ENCODE measurements at regions of chr1 and their contacts with region 1.

Region 1: DNA sequence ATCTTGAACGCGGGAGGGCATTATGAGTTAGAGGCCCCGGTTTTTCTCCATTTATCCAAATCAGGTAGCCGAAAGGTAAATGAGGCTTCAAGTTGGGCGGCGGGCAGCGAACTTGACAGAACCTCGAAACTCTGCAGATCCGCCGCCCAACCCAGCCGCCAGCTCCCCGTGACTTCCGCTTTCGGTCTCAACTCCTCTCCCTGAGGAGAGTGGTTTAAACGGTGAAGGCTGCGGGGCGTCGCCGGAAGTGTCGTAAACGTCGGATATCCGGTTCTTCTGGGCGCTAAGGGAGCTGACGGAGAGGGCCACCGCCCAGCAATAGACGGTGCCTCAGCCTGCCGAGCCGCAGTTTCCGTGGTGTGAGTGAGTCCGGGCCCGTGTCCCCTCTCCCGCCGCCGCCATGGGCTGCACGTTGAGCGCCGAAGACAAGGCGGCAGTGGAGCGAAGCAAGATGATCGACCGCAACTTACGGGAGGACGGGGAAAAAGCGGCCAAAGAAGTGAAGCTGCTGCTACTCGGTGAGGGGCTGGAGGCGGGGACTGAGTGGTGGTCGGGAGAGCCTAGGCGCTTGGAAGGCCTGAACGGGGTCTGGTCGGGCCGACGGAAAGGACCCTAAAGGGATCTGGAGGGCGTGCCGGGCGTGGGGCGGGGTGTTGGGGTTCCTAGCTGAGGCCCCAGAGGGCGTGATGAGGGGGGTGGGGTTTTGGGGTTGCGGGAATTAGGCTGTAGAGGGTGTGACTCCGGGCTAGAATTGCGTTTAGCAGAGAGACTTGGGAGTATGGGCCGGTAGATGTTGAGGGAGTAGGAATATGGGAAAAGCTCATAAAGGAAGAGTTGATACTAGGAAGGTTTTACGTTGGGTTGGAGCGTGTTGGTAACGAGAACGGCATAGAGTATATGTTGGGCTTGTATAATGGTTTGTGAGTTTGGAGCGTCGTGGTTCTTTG is at the start of gene GNAI3:
- DNase-seq: peak; percentile 94 to 99 (median 96)
- H3K4me3 ChIP-seq: peak within 1 kb of the TSS; percentile 94 to 99
- H3K4me3 Mint-ChIP-seq: peak within 1 kb of the TSS; percentile 93 to 100 (median 98)
- H3K27ac ChIP-seq: peak within 1 kb of the TSS; percentile 97
- H3K27ac Mint-ChIP-seq: peak within 1 kb of the TSS; percentile 92 to 100 (median 99)
- H3K4me1 ChIP-seq: peaks cover 60% of the 10 kb centered on the region
- H3K4me1 Mint-ChIP-seq: peaks cover 41 to 65% (median 49%) of the 10 kb centered on the region in 4 donors
- H3K27me3 ChIP-seq: no peaks in the 10 kb centered on the region
- H3K27me3 Mint-ChIP-seq: no peaks in the 10 kb centered on the region
- total RNA-seq, gene GNAI3: 7.7 to 8.1 TPM

Region 2: GRCh38 chr1:109483672-109484518 is 64.7 kb before region 1 on chr1 and contains the start of gene ATXN7L2:
- CTCF ChIA-PET with region 1: interaction called, 4 read pairs
- POLR2A ChIA-PET with region 1: interaction called, 32 read pairs
- intact Hi-C with region 1: no loop called
- DNase-seq: peak; percentile 92 to 95 (median 93)
- H3K4me3 ChIP-seq: peak within 1 kb of the TSS; percentile 95 to 98
- H3K4me3 Mint-ChIP-seq: peak within 1 kb of the TSS; percentile 91 to 96 (median 94)
- H3K27ac ChIP-seq: peak within 1 kb of the TSS; percentile 76
- H3K27ac Mint-ChIP-seq: peak within 1 kb of the TSS; percentile 86 to 97 (median 92)
- H3K4me1 ChIP-seq: peaks cover 20% of the 10 kb centered on the region
- H3K4me1 Mint-ChIP-seq: peaks cover 17 to 42% (median 30%) of the 10 kb centered on the region in 4 donors
- H3K27me3 ChIP-seq: peaks cover 4% of the 10 kb centered on the region
- H3K27me3 Mint-ChIP-seq: peaks cover 0 to 5% of the 10 kb centered on the region in 2 donors
- total RNA-seq, gene ATXN7L2: 7.4 to 9.0 TPM

Region 3: DNA sequence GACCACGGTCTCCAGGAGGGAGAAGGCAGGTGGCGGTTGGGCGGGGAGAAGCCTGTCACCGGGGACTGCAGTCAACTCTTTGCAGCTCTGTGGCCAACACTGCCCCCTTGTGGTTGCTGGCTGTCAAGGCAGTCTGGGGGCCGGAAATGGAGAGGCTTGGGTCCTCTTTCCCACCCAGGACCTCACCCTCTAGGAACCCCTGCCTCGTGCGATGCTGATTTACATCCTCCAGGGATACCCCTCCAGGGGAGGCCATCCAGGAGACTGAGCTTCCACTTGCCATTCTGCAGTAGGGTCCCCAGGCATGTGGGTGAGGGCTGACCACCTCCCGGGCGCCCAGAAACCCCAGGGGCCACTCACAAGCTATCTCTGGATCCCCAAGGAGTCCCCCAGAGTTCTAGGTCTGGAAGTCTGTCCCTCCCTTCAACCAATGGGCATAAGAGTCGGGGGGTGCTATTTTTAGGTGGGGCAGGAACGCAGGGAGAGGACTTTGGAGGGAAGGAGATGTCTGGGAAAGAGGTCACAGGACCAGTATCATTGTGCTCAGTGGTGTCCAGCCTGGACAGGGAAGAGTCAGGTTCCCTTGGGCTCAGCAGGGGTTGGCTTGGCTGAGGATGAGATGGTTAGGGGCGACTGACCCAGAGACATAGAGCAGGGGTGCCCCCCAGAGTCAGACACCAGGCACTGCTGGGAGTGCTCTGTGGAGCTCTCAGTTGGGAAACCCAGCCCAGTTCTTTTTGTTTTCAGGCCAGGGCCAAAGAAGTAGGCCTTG is 16.0 kb before region 1 on chr1:
- CTCF ChIA-PET with region 1: interaction called, 27 read pairs
- POLR2A ChIA-PET with region 1: interaction called, 14 read pairs
- intact Hi-C with region 1: no loop called
- DNase-seq: peak; percentile 84 to 90 (median 86)
- H3K4me3 ChIP-seq: peak overlapping the region; percentile 55 to 71
- H3K4me3 Mint-ChIP-seq: peak overlapping the region; percentile 77 to 91 (median 86)
- H3K27ac ChIP-seq: peak overlapping the region; percentile 29
- H3K27ac Mint-ChIP-seq: peak overlapping the region; percentile 61 to 96 (median 89)
- H3K4me1 ChIP-seq: peaks cover 25% of the 10 kb centered on the region
- H3K4me1 Mint-ChIP-seq: peaks cover 15 to 37% (median 25%) of the 10 kb centered on the region in 4 donors
- H3K27me3 ChIP-seq: no peaks in the 10 kb centered on the region
- H3K27me3 Mint-ChIP-seq: peaks cover 0 to 2% of the 10 kb centered on the region in 2 donors

Region 4: DNA sequence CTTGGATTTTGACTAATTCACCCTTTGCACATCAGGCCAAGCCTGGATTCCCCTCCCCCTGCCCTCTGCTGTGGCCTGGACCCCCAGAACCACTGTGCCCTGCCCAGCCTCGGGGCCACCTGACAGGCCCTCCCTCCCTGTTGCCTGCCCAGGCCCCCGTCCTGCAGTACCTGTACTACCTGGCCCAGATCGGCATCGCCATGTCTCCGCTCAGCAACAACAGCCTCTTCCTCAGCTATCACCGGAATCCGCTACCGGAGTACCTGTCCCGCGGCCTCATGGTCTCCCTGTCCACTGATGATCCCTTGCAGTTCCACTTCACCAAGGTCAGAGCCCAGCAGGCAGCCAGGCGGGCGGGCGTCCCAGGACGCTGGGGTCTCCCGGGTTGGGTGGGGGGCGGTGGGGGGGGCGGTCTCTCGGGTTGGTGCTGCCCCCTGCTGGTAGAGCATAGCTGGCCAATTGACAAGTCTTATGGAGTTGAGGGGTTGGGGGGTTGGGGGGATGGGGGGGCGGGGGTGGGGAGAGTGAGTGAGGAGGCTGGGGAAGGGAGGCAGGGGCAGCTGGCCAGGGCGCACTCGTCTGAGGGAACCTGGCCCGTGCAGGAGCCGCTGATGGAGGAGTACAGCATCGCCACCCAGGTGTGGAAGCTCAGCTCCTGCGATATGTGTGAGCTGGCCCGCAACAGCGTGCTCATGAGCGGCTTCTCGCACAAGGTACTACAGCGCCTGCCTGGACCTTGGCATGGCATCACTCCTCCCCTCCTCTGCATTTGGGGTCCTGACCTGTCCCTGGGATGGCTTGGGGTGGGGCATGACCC is 81.7 kb after region 1 on chr1:
- CTCF ChIA-PET with region 1: interaction called, 314 read pairs
- POLR2A ChIA-PET with region 1: interaction called, 114 read pairs
- intact Hi-C with region 1: loop called (anchors 1 kb)
- DNase-seq: peak in 2 of 5 donors; percentile 21 to 39
- H3K4me3 ChIP-seq: no peak overlapping the region
- H3K4me3 Mint-ChIP-seq: no peak overlapping the region
- H3K27ac ChIP-seq: no peak overlapping the region
- H3K27ac Mint-ChIP-seq: peak overlapping the region in 4 of 7 donors; percentile 13 to 73 (median 54)
- H3K4me1 ChIP-seq: peaks cover 13% of the 10 kb centered on the region
- H3K4me1 Mint-ChIP-seq: peaks cover 9 to 15% (median 11%) of the 10 kb centered on the region in 4 donors
- H3K27me3 ChIP-seq: no peaks in the 10 kb centered on the region
- H3K27me3 Mint-ChIP-seq: no peaks in the 10 kb centered on the region

Region 5: DNA sequence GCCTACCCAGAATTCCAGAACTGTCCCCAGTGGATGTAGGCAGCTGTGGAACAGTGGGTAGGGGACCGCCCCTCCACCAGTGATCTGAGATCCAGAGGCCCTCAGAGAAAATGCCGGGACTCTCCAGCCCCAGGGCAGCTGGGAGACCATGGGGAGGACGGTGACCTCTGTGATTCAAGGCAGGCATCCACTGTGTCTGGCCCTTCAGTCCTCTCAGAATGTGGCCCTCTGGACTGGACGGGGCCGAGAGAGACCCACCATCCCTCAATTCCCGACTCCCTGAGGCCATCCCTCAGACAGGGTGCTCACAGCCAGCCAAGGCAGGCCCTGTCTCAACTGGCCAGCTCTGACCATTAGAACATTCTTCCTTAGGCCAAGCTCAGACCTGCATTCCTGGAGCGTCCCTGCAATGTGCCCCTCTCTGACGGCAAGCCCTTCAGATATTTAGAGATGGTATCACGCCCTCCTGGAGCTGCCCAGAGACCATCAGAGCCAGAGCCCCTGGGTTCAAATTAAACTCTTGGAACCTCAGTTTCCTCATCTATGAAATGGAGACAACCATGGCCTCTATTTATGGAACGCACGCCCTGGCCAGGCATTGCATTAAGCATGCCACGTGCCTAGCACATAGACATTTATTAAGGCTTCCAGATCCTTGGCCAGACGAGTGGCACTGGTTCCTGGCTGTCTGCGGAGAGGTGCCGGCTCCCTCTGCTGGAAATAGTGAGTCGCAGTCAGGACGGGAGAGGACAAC is 224.7 kb after region 1 on chr1:
- CTCF ChIA-PET with region 1: interaction called, 97 read pairs
- POLR2A ChIA-PET with region 1: interaction called, 16 read pairs
- intact Hi-C with region 1: no loop called
- DNase-seq: peak; percentile 68 to 76 (median 74)
- H3K4me3 ChIP-seq: no peak overlapping the region
- H3K4me3 Mint-ChIP-seq: no peak overlapping the region
- H3K27ac ChIP-seq: no peak overlapping the region
- H3K27ac Mint-ChIP-seq: peak overlapping the region in 5 of 7 donors; percentile 29 to 56 (median 42)
- H3K4me1 ChIP-seq: peaks cover 6% of the 10 kb centered on the region
- H3K4me1 Mint-ChIP-seq: peaks cover 9 to 21% (median 10%) of the 10 kb centered on the region in 4 donors
- H3K27me3 ChIP-seq: no peaks in the 10 kb centered on the region
- H3K27me3 Mint-ChIP-seq: peaks cover 0 to 3% of the 10 kb centered on the region in 2 donors